ENCODE measurements at regions of chr1 and their contacts with region 1.

Region 1: GRCh38 chr1:179002552-179003345 is 22.9 kb upstream of the FAM20B start:
- DNase-seq: peak; percentile 49 to 71
- ATAC-seq: peak; percentile 92 to 94
- H3K4me3 ChIP-seq: peak overlapping the region; percentile 16; the same call in 1 of the 3 replicates
- H3K27ac ChIP-seq: peak overlapping the region; percentile 61 to 67
- H3K4me1 ChIP-seq: peaks cover 10% of the 10 kb centered on the region; the same call in 2 of the 3 replicates
- CTCF ChIP-seq: peak; percentile 95
- EP300 ChIP-seq: no peak
- POLR2A ChIP-seq: no peak
- RAD21 ChIP-seq: peak; percentile 96 to 98

Region 2: GRCh38 chr1:178310685-178311105 is 692.1 kb before region 1 on chr1:
- CTCF ChIA-PET with region 1: interaction called, 22 read pairs
- POLR2A ChIA-PET with region 1: no interaction called
- DNase-seq: peak; percentile 64 to 76
- ATAC-seq: peak; percentile 89 to 91
- H3K4me3 ChIP-seq: no peak overlapping the region
- H3K27ac ChIP-seq: no peak overlapping the region
- H3K4me1 ChIP-seq: 0 out of 3 replicates have a peak, but pooled peaks cover 7% of the 10 kb centered on the region
- CTCF ChIP-seq: peak; percentile 86
- EP300 ChIP-seq: no peak
- POLR2A ChIP-seq: no peak
- RAD21 ChIP-seq: peak; percentile 83 to 89

Region 3: DNA sequence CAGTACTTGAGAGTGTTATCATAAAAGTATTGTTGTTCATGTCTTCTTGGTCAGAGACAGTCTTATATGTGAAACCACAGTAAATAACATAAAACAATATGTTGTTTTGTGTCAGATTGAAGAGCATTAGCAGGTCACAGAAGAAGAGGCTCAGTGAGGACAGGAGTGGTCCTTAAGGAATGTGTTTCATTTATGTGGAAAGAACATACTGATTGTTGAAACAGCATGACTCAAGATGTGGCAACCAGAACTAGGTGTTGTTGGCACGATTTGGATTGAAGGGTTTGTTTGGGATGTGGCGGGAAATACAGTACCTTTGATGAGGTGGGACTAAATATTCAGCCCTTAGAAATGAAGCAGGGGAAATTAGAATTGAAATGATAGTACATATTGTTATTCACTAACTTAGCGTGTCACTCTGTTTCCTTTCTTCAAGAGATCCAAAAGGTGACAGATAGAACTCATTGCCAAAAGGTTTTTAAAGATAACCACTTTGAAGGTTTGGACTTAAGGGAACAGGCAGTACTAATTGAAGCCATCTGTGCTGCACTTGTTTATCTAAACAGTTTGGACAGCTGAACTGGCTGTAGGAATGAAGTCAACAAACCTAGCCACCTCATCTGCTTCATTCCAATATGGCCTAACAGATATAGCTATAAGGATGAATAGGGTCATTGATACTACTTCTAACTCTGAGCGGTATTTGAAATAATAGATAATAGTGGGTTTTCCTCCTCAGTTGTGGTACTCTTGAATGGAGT is 263.3 kb before region 1 on chr1:
- CTCF ChIA-PET with region 1: interaction called, 10 read pairs
- POLR2A ChIA-PET with region 1: no interaction called
- DNase-seq: no peak
- ATAC-seq: no peak
- H3K4me3 ChIP-seq: no peak overlapping the region
- H3K27ac ChIP-seq: no peak overlapping the region; a peak in 1 of 6 replicates
- H3K4me1 ChIP-seq: no peaks in the 10 kb centered on the region
- CTCF ChIP-seq: no peak
- EP300 ChIP-seq: no peak
- POLR2A ChIP-seq: no peak
- RAD21 ChIP-seq: no peak

Region 4: DNA sequence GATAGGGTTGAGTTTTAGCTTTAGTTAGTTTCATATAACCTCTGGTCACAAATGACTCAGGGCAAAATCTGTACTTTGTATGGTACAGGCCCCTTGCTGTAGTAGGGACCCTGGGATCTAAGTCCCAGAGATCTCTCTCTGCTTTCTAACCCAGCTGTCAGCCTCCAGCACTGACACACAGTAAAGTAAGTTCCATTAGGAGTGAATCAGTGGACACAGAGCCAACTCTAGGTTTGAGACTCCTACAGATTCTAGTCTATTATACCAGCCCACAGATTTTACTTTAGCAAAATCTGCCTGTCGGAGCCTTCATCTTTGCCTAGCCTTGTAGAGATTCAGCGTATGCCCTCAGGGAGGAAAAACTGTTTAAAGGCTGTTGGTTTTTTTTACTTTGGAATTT is 184.3 kb before region 1 on chr1:
- CTCF ChIA-PET with region 1: interaction called, 12 read pairs
- POLR2A ChIA-PET with region 1: no interaction called
- DNase-seq: no peak
- ATAC-seq: no peak
- H3K4me3 ChIP-seq: no peak overlapping the region
- H3K27ac ChIP-seq: no peak overlapping the region
- H3K4me1 ChIP-seq: no peaks in the 10 kb centered on the region
- CTCF ChIP-seq: no peak
- EP300 ChIP-seq: no peak
- POLR2A ChIP-seq: no peak
- RAD21 ChIP-seq: no peak

Region 5: DNA sequence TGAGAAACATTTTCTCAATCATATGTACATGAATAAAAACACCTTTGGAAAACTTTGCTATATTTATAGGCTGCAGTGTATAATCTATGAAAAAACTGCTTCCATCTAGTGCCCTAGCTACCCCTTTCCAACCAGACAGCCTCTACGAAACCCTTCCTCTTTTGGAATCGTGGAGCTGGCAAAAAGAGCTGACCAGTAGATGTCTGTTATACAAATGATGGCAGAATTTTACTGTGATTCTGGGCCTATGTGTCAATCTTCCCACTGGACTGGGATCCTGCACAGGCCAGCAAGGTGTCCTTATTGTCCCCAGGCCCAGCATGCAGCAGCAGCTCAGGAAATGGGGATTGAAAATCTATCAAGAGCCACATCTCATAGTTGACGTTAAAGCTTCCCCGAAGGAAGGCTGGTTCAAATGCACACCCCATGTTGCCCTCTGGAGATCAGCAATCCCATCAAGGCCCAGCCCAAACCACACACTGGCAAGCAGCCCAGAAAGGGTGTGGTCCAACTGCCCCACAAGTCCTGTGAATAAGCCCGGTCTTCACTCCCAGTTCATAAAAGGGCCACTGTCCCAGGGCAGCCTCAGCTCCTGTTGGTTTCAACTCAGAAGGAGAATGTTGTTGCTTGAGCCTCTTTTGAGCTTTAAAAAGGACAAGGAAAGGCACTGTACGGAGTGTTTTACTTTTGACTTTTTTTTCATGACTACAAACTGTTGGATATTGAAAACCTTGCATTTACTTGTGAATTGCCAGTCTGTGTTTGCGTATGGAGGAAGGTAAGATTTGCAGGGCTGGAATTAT is 14.2 kb after region 1 on chr1:
- CTCF ChIA-PET with region 1: interaction called, 99 read pairs
- POLR2A ChIA-PET with region 1: no interaction called
- DNase-seq: peak; percentile 85 to 92
- ATAC-seq: peak; percentile 91 to 95
- H3K4me3 ChIP-seq: peak overlapping the region; percentile 19; the same call in 2 of the 3 replicates
- H3K27ac ChIP-seq: peak overlapping the region; percentile 60 to 82
- H3K4me1 ChIP-seq: peaks cover 37% of the 10 kb centered on the region
- CTCF ChIP-seq: no peak
- EP300 ChIP-seq: no peak
- POLR2A ChIP-seq: no peak
- RAD21 ChIP-seq: no peak; a peak in 1 of 5 replicates